ENCODE measurements at regions of chr11 and their contacts with region 1.

Region 1: DNA sequence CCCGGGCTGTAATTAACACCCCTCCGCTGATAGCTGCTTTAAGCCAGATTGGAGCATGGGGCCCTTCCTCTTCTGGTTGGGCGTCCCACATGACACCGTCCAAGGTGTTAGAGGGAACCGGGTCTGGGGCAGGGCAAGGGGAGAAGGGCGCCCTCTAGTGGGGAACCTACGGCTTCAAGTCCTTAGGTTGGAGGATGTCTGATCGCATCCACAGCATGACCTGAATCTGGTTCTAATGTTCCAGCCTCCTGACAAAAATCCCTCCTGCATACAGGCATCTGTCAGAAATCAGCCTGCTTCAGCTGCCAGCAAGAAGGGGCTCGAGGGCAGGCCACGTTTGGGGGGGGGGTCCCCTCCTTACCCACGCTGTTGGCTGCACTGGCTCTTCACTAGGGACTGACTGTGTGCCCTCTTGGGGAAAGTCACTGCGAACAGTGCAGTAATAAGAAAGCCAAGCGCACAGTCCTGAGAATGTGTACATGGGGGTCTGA is 94.2 kb upstream of the TBCEL start:
- DNase-seq: peak in 8 of 14 experiments; percentile 6 to 60 (median 23)
- ATAC-seq: no peak
- H3K4me3 ChIP-seq: no peak overlapping the region
- H3K4me3 Mint-ChIP-seq: no peak overlapping the region
- H3K27ac ChIP-seq: no peak overlapping the region
- H3K27ac Mint-ChIP-seq: no peak overlapping the region
- H3K4me1 ChIP-seq: no peaks in the 10 kb centered on the region
- H3K4me1 Mint-ChIP-seq: no peaks in the 10 kb centered on the region
- H3K27me3 ChIP-seq: peaks cover 0 to 3% of the 10 kb centered on the region in 2 experiments
- H3K27me3 Mint-ChIP-seq: peaks cover 16% of the 10 kb centered on the region
- CTCF ChIP-seq: peak; percentile 53

Region 2: DNA sequence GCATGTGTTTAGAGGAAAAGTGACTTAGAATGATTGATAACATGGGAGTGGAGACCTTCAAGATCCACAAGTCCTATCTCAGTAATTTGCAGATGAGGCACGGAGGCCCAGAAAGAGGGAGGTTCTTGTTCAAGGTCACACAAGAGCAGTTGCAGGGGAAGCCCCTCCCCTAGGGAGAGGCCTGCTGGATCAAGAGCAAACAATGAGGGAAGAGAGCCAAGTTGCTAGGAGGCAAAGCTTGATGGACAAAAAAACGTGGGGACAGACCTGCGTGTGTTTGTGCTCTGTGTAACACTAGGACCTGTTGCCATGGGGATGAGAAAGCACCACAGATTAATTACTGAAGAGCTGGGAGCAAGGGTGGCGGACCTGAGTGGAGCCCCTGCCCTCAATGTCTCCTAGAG is 1576.8 kb before region 1 on chr11:
- CTCF ChIA-PET with region 1: no interaction called
- POLR2A ChIA-PET with region 1: no interaction called
- intact Hi-C with region 1: no loop called
- DNase-seq: no peak
- ATAC-seq: no peak
- H3K4me3 ChIP-seq: no peak overlapping the region
- H3K4me3 Mint-ChIP-seq: no peak overlapping the region
- H3K27ac ChIP-seq: no peak overlapping the region
- H3K27ac Mint-ChIP-seq: no peak overlapping the region
- H3K4me1 ChIP-seq: peaks cover 20% of the 10 kb centered on the region
- H3K4me1 Mint-ChIP-seq: peaks cover 10% of the 10 kb centered on the region
- H3K27me3 ChIP-seq: peaks cover 4 to 11% of the 10 kb centered on the region in 2 experiments
- H3K27me3 Mint-ChIP-seq: peaks cover 50% of the 10 kb centered on the region
- CTCF ChIP-seq: no peak

Region 3: DNA sequence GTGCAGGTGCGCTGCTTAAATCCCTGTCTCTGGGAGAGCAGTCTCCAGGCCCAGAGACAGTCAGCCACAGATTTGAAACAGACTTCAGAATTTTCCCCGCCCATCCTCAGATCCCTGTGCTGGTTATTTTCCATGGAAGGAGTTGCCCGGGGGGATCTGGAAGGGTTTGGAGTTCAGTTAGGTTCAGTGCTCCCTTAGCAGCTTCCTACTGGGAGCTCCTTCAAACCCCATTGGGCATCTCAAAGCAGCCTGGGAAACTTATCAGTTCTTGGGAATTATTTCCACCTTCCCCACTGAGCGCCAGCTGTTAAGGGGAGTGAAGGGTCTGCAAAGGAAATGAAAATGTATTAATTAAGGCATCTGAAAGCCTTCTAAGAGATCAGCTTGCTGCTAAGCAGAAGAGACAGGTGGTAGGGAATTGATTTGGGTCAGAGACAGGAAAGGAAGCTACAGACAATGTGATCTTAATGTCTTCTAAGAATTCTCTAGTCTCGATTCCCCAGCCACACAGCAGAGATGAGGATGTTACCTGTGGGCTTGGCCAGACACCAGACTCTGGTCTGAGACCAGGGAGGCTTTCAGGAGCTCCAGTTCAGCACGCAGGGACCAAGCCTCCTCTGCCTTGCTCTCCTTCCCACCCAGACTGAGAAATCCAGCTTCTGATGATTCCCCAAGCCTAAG is 12.0 kb before region 1 on chr11:
- CTCF ChIA-PET with region 1: no interaction called
- POLR2A ChIA-PET with region 1: no interaction called
- intact Hi-C with region 1: no loop called
- DNase-seq: no peak
- ATAC-seq: no peak
- H3K4me3 ChIP-seq: no peak overlapping the region
- H3K4me3 Mint-ChIP-seq: no peak overlapping the region
- H3K27ac ChIP-seq: no peak overlapping the region
- H3K27ac Mint-ChIP-seq: no peak overlapping the region
- H3K4me1 ChIP-seq: no peaks in the 10 kb centered on the region
- H3K4me1 Mint-ChIP-seq: no peaks in the 10 kb centered on the region
- H3K27me3 ChIP-seq: no peaks in the 10 kb centered on the region
- H3K27me3 Mint-ChIP-seq: peaks cover 9% of the 10 kb centered on the region
- CTCF ChIP-seq: no peak

Region 4: DNA sequence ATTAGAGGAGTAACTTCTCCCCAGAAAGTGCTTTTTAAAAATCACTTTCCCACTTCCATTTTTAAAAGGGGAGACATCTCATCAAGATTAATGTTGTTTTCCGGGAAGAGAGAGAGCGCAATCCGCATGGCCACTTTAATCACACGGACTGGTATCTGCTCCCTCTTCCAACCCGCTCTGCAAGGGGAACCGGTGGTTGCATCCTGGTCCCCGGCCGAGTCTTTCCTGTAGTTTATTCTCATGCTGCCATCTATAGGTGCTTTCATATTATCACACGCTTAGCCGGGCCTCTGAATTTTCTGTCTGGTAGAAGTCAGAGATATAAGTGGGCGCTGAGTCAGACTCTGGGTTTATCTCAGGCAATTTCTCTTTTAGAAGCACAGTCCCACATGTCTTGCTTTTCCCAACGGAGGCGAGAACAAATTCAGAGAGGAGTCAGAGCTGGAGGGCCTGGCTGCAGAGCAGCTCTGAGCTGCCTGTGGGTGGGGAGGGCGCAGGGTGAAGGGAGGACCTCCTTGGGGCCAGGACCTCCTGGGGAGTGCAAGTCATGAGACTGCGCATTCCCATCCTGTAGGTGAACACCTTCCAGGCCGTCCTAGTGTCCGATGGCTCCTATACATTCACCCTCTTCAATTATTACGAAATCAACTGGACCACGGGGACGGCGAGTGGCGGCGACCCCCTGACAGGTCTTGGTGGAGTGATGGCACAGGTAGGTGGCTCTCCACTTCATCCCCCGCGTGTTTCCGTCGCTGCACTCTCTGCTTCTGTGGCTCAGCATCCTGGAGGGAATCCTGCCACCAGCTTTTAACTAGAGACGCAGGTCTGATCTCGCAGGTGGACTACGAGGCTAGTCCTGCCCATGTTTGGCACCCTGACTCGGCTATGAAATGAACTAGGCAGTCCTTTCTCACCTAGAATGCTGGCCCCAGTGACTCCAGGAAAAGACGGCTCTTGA is 183.1 kb after region 1 on chr11:
- CTCF ChIA-PET with region 1: no interaction called
- POLR2A ChIA-PET with region 1: no interaction called
- intact Hi-C with region 1: loop called (anchors 5 kb)
- DNase-seq: peak in 9 of 14 experiments; percentile 2 to 45 (median 11)
- ATAC-seq: no peak
- H3K4me3 ChIP-seq: no peak overlapping the region
- H3K4me3 Mint-ChIP-seq: no peak overlapping the region
- H3K27ac ChIP-seq: no peak overlapping the region
- H3K27ac Mint-ChIP-seq: no peak overlapping the region
- H3K4me1 ChIP-seq: peaks cover 4% of the 10 kb centered on the region
- H3K4me1 Mint-ChIP-seq: no peaks in the 10 kb centered on the region
- H3K27me3 ChIP-seq: peaks cover 4 to 6% of the 10 kb centered on the region in 2 experiments
- H3K27me3 Mint-ChIP-seq: peaks cover 23% of the 10 kb centered on the region
- CTCF ChIP-seq: peak; percentile 56

Region 5: DNA sequence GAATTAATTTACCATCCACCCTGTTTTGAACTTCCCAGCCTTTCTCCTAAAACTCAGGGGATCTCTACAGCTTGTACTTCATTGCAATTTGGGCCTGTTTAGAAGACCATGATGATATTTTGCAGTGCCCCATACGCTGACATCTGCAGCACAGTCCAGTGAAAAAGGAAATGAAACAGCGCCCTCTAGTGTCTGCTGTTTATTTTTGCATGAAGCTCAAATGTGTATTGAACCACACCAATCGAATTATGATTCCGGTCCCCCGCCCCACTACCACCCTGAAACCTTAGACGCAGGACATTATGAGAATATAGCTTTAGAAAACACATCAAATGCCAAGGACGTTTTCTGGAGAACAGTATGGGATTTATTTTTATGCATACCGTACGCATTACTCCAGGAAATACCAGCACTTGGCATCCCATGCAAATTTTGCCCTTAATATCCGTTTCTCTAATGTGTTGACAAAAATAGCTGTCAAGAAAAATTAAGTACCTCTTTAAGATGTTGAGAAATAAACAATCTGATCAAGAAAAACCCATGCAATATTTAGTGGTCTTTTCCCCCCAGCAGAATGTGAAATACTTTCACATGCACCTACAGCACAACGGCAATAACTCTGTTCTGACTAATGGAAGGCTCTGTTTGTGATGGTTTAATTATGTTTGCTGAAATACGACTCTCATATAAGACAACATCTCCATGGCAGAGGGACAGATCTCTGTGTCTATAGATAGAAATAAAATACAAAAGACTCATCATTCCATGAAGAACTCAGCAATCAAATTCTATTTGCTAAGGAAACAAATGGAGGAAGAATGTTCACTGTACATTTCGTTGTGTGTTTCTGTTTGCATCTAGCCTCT is 265.3 kb after region 1 on chr11:
- CTCF ChIA-PET with region 1: no interaction called
- POLR2A ChIA-PET with region 1: no interaction called
- intact Hi-C with region 1: loop called (anchors 2 to 10 kb)
- DNase-seq: peak in 13 of 14 experiments; percentile 5 to 81 (median 41)
- ATAC-seq: peak; percentile 51
- H3K4me3 ChIP-seq: no peak overlapping the region
- H3K4me3 Mint-ChIP-seq: no peak overlapping the region
- H3K27ac ChIP-seq: no peak overlapping the region
- H3K27ac Mint-ChIP-seq: no peak overlapping the region
- H3K4me1 ChIP-seq: no peaks in the 10 kb centered on the region
- H3K4me1 Mint-ChIP-seq: no peaks in the 10 kb centered on the region
- H3K27me3 ChIP-seq: peaks cover 2 to 12% of the 10 kb centered on the region in 2 experiments
- H3K27me3 Mint-ChIP-seq: peaks cover 45% of the 10 kb centered on the region
- CTCF ChIP-seq: peak; percentile 98